ENCODE measurements at regions of chr1 and their contacts with region 1.

Region 1: GRCh38 chr1:222241410-222241809 is 306.5 kb downstream of the HHIPL2 start:
- DNase-seq: no peak
- H3K27ac ChIP-seq: no peak overlapping the region
- CTCF ChIP-seq: no peak

Region 2: GRCh38 chr1:222256058-222256457 is 14.6 kb after region 1 on chr1:
- CTCF ChIA-PET with region 1: interaction called, 10 read pairs
- POLR2A ChIA-PET with region 1: no interaction called
- DNase-seq: no peak
- H3K27ac ChIP-seq: no peak overlapping the region
- CTCF ChIP-seq: no peak

Measured in RWPE1 (cell line).